IMR-90 (cell line): ENCODE measurements at regions of chr18 and their contacts with region 1.

Region 1: DNA sequence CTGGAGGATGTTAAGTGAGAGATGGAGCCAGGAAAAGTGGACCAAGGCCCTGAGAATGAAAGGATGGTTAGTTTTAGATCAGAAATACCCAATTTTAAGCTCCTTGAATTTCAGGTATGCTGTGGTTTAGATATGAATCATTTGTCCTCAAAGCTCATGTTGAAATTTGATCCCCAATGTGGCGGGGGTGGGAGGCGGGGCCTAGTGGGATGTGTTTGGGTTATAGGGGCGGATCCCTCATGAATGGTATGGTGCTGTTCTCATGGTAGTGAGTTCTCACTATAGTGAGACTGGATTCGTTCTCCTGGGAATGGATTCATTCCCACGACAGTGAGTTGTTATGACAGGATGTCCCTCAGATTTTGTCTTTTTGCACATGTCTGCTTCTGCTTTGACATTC is 11.4 kb downstream of the MYO5B start:
- DNase-seq: peak; percentile 31
- ATAC-seq: no peak
- H3K4me3 ChIP-seq: no peak overlapping the region
- H3K27ac ChIP-seq: no peak overlapping the region
- H3K4me1 ChIP-seq: no peaks in the 10 kb centered on the region
- H3K27me3 ChIP-seq: no peaks in the 10 kb centered on the region; the same call in 1 of the 2 replicates
- CTCF ChIP-seq: no peak
- POLR2A ChIP-seq: no peak
- RAD21 ChIP-seq: no peak

Region 2: GRCh38 chr18:49967171-49967570 is 216.4 kb before region 1 on chr18:
- CTCF ChIA-PET with region 1: no interaction called
- POLR2A ChIA-PET with region 1: no interaction called
- dilution Hi-C with region 1: no loop called
- in situ Hi-C with region 1: no loop called
- intact Hi-C with region 1: loop called (anchors 10 kb)
- DNase-seq: no peak
- ATAC-seq: no peak
- H3K4me3 ChIP-seq: no peak overlapping the region
- H3K27ac ChIP-seq: no peak overlapping the region
- H3K4me1 ChIP-seq: no peaks in the 10 kb centered on the region
- H3K27me3 ChIP-seq: peaks cover 1% of the 10 kb centered on the region
- CTCF ChIP-seq: no peak
- POLR2A ChIP-seq: no peak
- RAD21 ChIP-seq: no peak

Region 3: DNA sequence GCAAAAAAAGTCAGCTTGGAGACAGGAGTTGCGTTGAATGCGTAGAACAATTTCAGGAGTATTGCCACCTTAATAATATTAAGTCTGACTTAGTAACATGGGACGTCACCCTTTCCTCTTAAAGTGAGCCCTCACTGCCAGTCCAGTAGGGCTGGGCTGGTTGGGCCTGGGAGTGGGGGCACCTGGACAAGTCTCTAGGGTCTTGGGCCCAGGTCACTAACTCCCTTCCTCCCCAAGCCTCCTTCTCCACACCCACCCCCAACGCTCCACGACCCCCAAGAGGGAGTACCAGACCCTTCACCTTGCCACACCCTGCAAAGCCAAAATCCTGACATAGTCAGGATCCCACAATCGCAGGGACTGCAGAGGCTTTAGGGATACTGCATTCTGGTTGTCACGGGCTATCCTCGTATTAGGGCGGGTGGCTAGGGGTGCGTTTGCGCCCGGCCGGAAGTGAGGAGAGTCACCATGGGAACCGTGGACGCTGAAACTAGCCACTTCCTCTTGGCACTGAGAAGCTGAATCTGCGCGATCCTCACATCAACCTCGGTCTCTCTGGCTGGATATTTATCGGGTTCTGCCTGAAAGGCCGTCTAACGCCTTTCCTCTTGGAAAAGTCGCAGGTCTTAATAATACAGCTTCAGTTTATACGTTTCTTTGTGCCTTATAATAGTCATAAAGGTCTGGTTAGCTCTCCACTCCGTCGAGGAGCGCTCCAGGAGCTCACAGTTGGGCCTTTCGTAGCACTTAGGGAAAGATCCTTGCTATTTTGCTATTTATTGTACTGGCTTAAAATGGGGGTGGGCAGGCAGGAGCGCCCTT is 114.3 kb after region 1 on chr18:
- CTCF ChIA-PET with region 1: no interaction called
- POLR2A ChIA-PET with region 1: no interaction called
- dilution Hi-C with region 1: no loop called
- in situ Hi-C with region 1: no loop called
- intact Hi-C with region 1: no loop called
- DNase-seq: peak; percentile 61
- ATAC-seq: peak; percentile 99
- H3K4me3 ChIP-seq: peak overlapping the region; percentile 49
- H3K27ac ChIP-seq: no peak overlapping the region
- H3K4me1 ChIP-seq: no peaks in the 10 kb centered on the region
- H3K27me3 ChIP-seq: peaks cover 14% of the 10 kb centered on the region
- CTCF ChIP-seq: no peak
- POLR2A ChIP-seq: no peak
- RAD21 ChIP-seq: no peak

Region 4: GRCh38 chr18:50330176-50330575 is 146.6 kb after region 1 on chr18:
- CTCF ChIA-PET with region 1: no interaction called
- POLR2A ChIA-PET with region 1: no interaction called
- dilution Hi-C with region 1: no loop called
- in situ Hi-C with region 1: no loop called
- intact Hi-C with region 1: no loop called
- DNase-seq: no peak
- ATAC-seq: no peak
- H3K4me3 ChIP-seq: no peak overlapping the region
- H3K27ac ChIP-seq: no peak overlapping the region
- H3K4me1 ChIP-seq: no peaks in the 10 kb centered on the region
- H3K27me3 ChIP-seq: no peaks in the 10 kb centered on the region; the same call in 1 of the 2 replicates
- CTCF ChIP-seq: no peak
- POLR2A ChIP-seq: no peak
- RAD21 ChIP-seq: no peak